Endothelial cell of umbilical vein (primary cell): ENCODE measurements at regions of chr2 and their contacts with region 1.

Region 1: GRCh38 chr2:56132138-56132537 is 51.7 kb upstream of the CCDC85A start:
- DNase-seq: peak; percentile 76
- H3K4me3 ChIP-seq: no peak overlapping the region
- H3K27ac ChIP-seq: no peak overlapping the region
- H3K4me1 ChIP-seq: peaks cover 12% of the 10 kb centered on the region
- H3K27me3 ChIP-seq: no peaks in the 10 kb centered on the region
- CTCF ChIP-seq: peak; percentile 30
- POLR2A ChIP-seq: no peak

Region 2: GRCh38 chr2:55771612-55772011 is 360.5 kb before region 1 on chr2:
- CTCF ChIA-PET with region 1: interaction called, 30 read pairs
- POLR2A ChIA-PET with region 1: no interaction called
- dilution Hi-C with region 1: no loop called
- intact Hi-C with region 1: loop called (anchors 1 kb)
- DNase-seq: peak; percentile 66
- H3K4me3 ChIP-seq: no peak overlapping the region
- H3K27ac ChIP-seq: peak overlapping the region; percentile 52
- H3K4me1 ChIP-seq: peaks cover 15% of the 10 kb centered on the region
- H3K27me3 ChIP-seq: no peaks in the 10 kb centered on the region
- CTCF ChIP-seq: peak; percentile 32 to 35
- POLR2A ChIP-seq: no peak

Region 3: GRCh38 chr2:55885129-55885943 is 246.8 kb before region 1 on chr2:
- CTCF ChIA-PET with region 1: interaction called, 4 read pairs
- POLR2A ChIA-PET with region 1: no interaction called
- dilution Hi-C with region 1: no loop called
- intact Hi-C with region 1: loop called (anchors 5 kb)
- DNase-seq: peak; percentile 95
- H3K4me3 ChIP-seq: no peak overlapping the region
- H3K27ac ChIP-seq: peak overlapping the region; percentile 97
- H3K4me1 ChIP-seq: peaks cover 96% of the 10 kb centered on the region
- H3K27me3 ChIP-seq: no peaks in the 10 kb centered on the region
- CTCF ChIP-seq: no peak
- POLR2A ChIP-seq: peak; percentile 88

Region 4: GRCh38 chr2:55966401-55967118 is 165.6 kb before region 1 on chr2:
- CTCF ChIA-PET with region 1: interaction called, 8 read pairs
- POLR2A ChIA-PET with region 1: interaction called, 3 read pairs
- dilution Hi-C with region 1: no loop called
- intact Hi-C with region 1: loop called (anchors 1 kb)
- DNase-seq: peak; percentile 97
- H3K4me3 ChIP-seq: no peak overlapping the region
- H3K27ac ChIP-seq: peak overlapping the region; percentile 97
- H3K4me1 ChIP-seq: peaks cover 50% of the 10 kb centered on the region
- H3K27me3 ChIP-seq: no peaks in the 10 kb centered on the region
- CTCF ChIP-seq: peak; percentile 7
- POLR2A ChIP-seq: peak; percentile 48

Region 5: DNA sequence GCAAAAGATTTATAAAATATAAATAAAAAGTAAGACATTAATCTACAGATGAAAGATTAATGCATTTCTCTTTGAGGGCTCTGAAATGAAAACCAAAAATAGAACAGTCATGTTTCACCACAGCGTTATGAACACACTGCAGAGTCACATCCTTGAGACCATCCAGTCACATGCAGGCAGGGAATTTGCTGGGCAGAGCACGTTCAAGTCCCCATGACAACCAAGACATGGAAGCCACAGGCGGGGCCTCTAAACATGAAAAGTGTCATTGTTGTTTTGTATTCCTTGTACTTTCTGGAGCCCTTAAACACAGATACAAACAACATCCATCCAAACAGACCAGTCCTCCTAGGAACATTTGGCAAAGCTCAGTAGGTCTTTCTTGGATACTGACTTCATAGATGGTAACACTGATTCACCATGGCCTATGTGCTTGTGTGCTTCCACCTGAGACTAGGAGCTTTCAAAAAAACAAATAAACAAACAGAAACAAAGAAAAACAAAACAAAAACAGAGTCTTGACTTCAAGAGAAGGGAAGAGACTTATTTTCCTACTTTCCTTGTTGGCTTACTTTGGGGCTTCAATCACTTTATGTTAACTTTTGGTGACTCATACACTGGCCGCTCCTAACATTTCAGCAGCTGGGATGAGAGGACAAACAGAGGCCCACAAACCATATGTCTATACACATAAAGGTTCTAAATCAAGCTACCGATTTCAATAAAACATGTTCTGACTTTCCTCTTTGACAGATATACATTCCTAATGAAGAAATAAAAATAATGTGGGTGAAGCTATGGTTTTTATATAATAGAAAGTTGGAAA is 47.8 kb before region 1 on chr2:
- CTCF ChIA-PET with region 1: interaction called, 14 read pairs
- POLR2A ChIA-PET with region 1: no interaction called
- dilution Hi-C with region 1: no loop called
- intact Hi-C with region 1: loop called (anchors 5 kb)
- DNase-seq: no peak
- H3K4me3 ChIP-seq: no peak overlapping the region
- H3K27ac ChIP-seq: no peak overlapping the region
- H3K4me1 ChIP-seq: no peaks in the 10 kb centered on the region
- H3K27me3 ChIP-seq: peaks cover 0 to 2% of the 10 kb centered on the region in 2 experiments
- CTCF ChIP-seq: no peak
- POLR2A ChIP-seq: no peak

Region 6: DNA sequence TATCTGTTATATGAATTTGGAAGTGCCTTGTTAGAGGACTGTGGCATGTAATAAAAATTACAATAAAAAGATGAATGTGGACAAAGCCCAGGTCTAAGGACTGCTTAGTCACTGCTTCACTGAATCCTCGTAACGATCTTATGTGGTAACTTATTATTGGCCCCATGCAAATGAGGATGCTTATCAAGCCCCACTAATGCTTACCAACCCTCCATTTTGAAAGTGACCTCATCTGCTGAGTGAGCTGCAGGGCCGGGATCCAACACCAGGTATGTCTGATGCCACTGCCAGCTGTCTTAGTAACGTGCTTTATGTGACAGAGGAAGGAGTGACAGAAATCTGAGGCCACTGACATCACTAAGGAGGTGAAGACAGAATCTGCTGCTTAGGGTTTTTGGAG is 13.7 kb before region 1 on chr2:
- CTCF ChIA-PET with region 1: interaction called, 25 read pairs
- POLR2A ChIA-PET with region 1: no interaction called
- dilution Hi-C with region 1: no loop called
- intact Hi-C with region 1: no loop called
- DNase-seq: no peak
- H3K4me3 ChIP-seq: no peak overlapping the region
- H3K27ac ChIP-seq: no peak overlapping the region
- H3K4me1 ChIP-seq: no peaks in the 10 kb centered on the region
- H3K27me3 ChIP-seq: no peaks in the 10 kb centered on the region
- CTCF ChIP-seq: no peak
- POLR2A ChIP-seq: no peak

Region 7: DNA sequence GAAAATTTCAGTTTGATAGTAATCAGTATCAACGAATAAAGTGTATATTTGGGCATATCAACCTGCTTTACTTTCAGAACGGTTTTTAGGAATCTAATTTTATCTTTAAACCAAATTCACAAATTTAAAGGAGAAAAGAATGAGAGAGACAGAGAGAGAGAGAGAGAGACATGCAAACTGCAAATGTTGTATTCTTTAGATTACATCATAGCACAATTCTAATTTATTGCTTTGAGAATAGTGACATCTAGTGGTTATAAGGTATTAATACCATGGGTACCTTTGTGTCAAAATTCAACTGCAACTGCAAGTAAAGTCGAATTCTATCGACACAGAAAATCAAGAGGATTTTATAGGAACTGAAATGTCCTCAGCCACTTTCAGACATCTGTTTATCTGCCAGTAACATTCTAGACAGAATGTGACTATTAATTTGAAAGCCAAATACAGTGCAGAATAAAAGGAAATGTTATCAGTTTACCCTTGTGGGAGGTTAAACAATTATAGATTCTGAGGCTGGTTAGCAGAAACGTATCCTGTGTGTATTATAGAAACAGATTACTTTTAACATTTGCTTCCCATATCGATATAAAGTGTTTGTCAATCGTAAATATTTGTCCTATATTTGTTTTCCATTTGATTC is 1384.7 kb after region 1 on chr2:
- CTCF ChIA-PET with region 1: interaction called, 16 read pairs
- POLR2A ChIA-PET with region 1: no interaction called
- dilution Hi-C with region 1: no loop called
- intact Hi-C with region 1: loop called (anchors 2 kb)
- DNase-seq: peak; percentile 58
- H3K4me3 ChIP-seq: no peak overlapping the region
- H3K27ac ChIP-seq: no peak overlapping the region
- H3K4me1 ChIP-seq: no peaks in the 10 kb centered on the region
- H3K27me3 ChIP-seq: peaks cover 0 to 1% of the 10 kb centered on the region in 2 experiments
- CTCF ChIP-seq: peak; percentile 16 to 24
- POLR2A ChIP-seq: no peak